ENCODE measurements at regions of chr7 and their contacts with region 1.

Region 1: GRCh38 chr7:98434095-98434494 is 33.2 kb upstream of the BAIAP2L1 start:
- DNase-seq: no peak
- H3K4me3 ChIP-seq: no peak overlapping the region
- H3K27ac ChIP-seq: no peak overlapping the region
- H3K4me1 ChIP-seq: no peaks in the 10 kb centered on the region
- H3K27me3 ChIP-seq: no peaks in the 10 kb centered on the region
- CTCF ChIP-seq: no peak
- POLR2A ChIP-seq: no peak

Region 2: GRCh38 chr7:98841179-98841997 is 407.3 kb after region 1 on chr7:
- intact Hi-C with region 1: loop called (anchors 5 kb)
- DNase-seq: peak; percentile 83
- H3K4me3 ChIP-seq: no peak overlapping the region
- H3K27ac ChIP-seq: peak overlapping the region in 1 of 2 donors; percentile 74
- H3K4me1 ChIP-seq: peaks cover 9% of the 10 kb centered on the region
- H3K27me3 ChIP-seq: no peaks in the 10 kb centered on the region
- CTCF ChIP-seq: peak; percentile 95 to 98 (median 98)
- POLR2A ChIP-seq: no peak